ENCODE measurements at regions of chr15 and their contacts with region 1.

Region 1: GRCh38 chr15:72722071-72722696 is 36.2 kb downstream of the BBS4 start:
- DNase-seq: peak; percentile 86
- H3K4me3 Mint-ChIP-seq: no peak overlapping the region
- H3K27ac Mint-ChIP-seq: no peak overlapping the region
- H3K4me1 Mint-ChIP-seq: peaks cover 5% of the 10 kb centered on the region
- H3K27me3 Mint-ChIP-seq: no peaks in the 10 kb centered on the region

Region 2: DNA sequence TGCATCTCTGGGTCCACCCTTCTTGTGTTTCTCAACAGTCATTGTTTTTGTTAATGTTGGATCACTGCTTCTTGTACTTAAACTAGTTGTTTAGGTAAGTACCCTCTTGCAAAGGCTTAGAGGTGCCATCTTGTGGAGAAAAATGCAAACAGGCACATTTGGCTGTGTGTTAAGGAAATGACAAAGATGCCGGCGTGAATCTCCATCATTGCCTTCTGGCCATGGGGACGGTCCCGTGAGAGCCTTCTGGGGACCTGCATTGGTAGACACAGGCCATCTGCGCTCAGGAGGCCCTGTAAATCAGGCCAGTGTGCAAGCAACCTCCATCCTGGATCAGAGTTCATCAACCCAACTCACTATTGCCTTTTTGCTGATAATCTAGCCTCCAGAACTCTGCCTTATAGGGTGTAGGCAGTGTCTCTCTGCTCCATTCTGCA is 1070.4 kb before region 1 on chr15:
- CTCF ChIA-PET with region 1: no interaction called
- intact Hi-C with region 1: no loop called
- DNase-seq: no peak
- H3K4me3 Mint-ChIP-seq: no peak overlapping the region
- H3K27ac Mint-ChIP-seq: no peak overlapping the region
- H3K4me1 Mint-ChIP-seq: no peaks in the 10 kb centered on the region
- H3K27me3 Mint-ChIP-seq: peaks cover 6% of the 10 kb centered on the region

Region 3: DNA sequence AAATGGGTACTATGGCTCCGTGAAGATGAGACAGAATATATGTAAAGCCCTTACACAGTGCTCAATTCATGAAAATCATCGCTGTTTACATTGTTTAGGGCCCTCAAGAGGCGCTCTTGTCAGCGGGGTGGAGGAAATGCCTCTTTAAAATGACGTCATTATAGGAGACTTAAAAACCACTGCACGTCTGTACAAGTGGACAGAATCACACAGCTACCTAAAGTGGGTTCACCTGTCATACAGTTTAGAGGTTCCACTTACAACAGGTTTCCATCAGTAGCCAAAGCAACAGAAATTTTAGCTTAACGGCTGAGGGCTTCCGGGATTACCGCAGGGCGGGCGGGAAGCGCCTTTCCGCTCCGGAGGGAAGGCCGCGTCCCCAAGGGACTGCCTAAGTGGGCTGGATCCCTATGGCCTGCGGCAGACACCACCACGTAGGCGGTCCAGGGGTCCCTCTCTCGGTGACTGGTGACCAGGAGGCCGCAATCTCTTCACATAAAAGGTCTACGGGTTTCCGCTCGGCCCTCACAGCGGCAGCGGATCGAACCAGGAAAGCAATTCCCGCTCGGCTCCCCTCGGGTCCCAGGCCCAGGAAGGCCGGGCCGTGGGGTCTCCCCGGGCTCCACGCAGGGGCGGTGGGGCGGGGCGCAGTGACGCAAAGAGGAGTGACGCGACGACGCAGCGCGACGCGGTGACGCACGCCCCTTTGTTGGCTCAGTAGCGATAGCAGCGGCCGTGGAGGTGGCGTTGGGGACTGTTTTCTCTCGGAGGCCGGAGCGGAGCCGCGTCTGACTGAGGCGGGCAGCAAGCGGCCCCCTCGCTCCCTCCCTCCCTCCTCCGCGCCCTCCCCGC is 248.3 kb before region 1 on chr15 and contains the start of gene ARIH1:
- CTCF ChIA-PET with region 1: no interaction called
- intact Hi-C with region 1: no loop called
- DNase-seq: peak; percentile 94
- H3K4me3 Mint-ChIP-seq: peak within 1 kb of the TSS; percentile 98
- H3K27ac Mint-ChIP-seq: peak within 1 kb of the TSS; percentile 98
- H3K4me1 Mint-ChIP-seq: peaks cover 34% of the 10 kb centered on the region
- H3K27me3 Mint-ChIP-seq: no peaks in the 10 kb centered on the region
- total RNA-seq, gene ARIH1: 174 to 183 TPM

Region 4: GRCh38 chr15:72740219-72740618 is 18.0 kb after region 1 on chr15:
- CTCF ChIA-PET with region 1: interaction called, 28 read pairs
- intact Hi-C with region 1: no loop called
- DNase-seq: no peak
- H3K4me3 Mint-ChIP-seq: no peak overlapping the region
- H3K27ac Mint-ChIP-seq: peak overlapping the region; percentile 59
- H3K4me1 Mint-ChIP-seq: peaks cover 32% of the 10 kb centered on the region
- H3K27me3 Mint-ChIP-seq: no peaks in the 10 kb centered on the region

Region 5: GRCh38 chr15:72770673-72771328 is 48.6 kb after region 1 on chr15:
- CTCF ChIA-PET with region 1: interaction called, 4 read pairs
- intact Hi-C with region 1: loop called (anchors 2 kb)
- DNase-seq: no peak
- H3K4me3 Mint-ChIP-seq: no peak overlapping the region
- H3K27ac Mint-ChIP-seq: peak overlapping the region; percentile 59
- H3K4me1 Mint-ChIP-seq: peaks cover 23% of the 10 kb centered on the region
- H3K27me3 Mint-ChIP-seq: no peaks in the 10 kb centered on the region

Region 6: GRCh38 chr15:72796515-72797337 is 74.5 kb after region 1 on chr15:
- CTCF ChIA-PET with region 1: interaction called, 4 read pairs
- intact Hi-C with region 1: loop called (anchors 1 kb)
- DNase-seq: peak; percentile 26
- H3K4me3 Mint-ChIP-seq: peak overlapping the region; percentile 70
- H3K27ac Mint-ChIP-seq: no peak overlapping the region
- H3K4me1 Mint-ChIP-seq: peaks cover 3% of the 10 kb centered on the region
- H3K27me3 Mint-ChIP-seq: peaks cover 20% of the 10 kb centered on the region

Region 7: GRCh38 chr15:72845981-72846383 is 123.8 kb after region 1 on chr15:
- CTCF ChIA-PET with region 1: no interaction called
- intact Hi-C with region 1: no loop called
- DNase-seq: no peak
- H3K4me3 Mint-ChIP-seq: no peak overlapping the region
- H3K27ac Mint-ChIP-seq: no peak overlapping the region
- H3K4me1 Mint-ChIP-seq: peaks cover 3% of the 10 kb centered on the region
- H3K27me3 Mint-ChIP-seq: peaks cover 23% of the 10 kb centered on the region

Region 8: DNA sequence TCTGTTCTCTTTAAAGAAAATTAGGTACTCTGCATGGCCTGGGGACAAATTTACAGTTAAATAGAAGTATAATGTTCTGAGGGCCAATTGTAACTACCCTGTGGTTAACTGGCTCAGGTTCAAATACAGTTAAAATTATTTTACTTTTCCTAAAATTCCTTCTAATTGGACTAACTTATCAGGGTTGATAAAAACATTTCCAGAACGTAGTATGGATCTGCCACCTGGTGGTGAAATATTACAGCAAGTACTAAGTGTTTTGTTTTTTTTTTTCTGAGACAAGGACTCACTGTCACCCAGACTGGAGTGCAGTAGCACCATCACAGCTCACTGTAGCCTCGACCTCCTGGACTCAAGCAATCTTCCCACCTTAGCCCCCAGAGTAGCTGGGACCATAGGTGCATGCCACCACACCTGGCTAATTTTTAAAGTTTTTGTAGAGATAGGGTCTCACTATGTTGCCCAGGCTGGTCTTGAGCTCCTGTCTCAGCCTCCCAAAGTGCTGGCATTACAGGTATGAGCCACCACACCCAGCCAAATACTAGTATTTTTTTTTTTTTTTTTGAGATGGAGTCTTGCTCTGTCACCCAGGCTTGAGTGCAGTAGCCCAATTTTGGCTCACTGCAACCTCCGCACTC is 359.3 kb after region 1 on chr15:
- CTCF ChIA-PET with region 1: interaction called, 20 read pairs
- intact Hi-C with region 1: loop called (anchors 1 kb)
- DNase-seq: peak; percentile 6
- H3K4me3 Mint-ChIP-seq: no peak overlapping the region
- H3K27ac Mint-ChIP-seq: no peak overlapping the region
- H3K4me1 Mint-ChIP-seq: no peaks in the 10 kb centered on the region
- H3K27me3 Mint-ChIP-seq: no peaks in the 10 kb centered on the region

Region 9: DNA sequence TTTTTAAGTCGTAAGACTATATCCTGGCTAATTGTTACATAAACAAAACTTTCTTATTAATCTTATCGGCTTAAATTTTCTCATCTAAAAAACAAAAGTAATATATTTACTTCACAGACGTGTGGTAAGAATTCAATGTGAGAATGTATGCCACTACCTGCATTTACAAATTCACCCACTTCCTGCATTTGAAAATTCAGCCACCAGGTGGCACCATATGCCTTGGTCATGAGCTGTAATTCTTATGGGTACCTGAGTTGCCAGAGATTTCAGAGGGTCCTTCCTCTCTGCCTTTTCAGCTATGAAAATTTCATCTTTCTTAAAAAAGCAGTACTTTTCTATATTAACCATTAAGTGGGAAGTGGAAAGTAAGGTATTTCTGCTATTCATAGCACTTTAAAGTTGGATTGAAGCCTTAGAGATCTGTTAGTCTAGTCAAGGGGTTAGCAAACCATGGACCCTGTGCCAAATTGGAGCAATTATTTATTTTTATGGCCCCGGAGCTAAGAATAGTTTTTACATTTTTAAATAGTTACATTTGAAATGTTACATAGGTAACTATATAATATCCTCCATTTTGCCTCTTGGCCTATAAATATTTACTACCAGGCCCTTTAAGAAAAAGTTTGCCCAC is 518.8 kb after region 1 on chr15:
- CTCF ChIA-PET with region 1: interaction called, 3 read pairs
- intact Hi-C with region 1: loop called (anchors 5 kb)
- DNase-seq: peak; percentile 89
- H3K4me3 Mint-ChIP-seq: no peak overlapping the region
- H3K27ac Mint-ChIP-seq: no peak overlapping the region
- H3K4me1 Mint-ChIP-seq: no peaks in the 10 kb centered on the region
- H3K27me3 Mint-ChIP-seq: no peaks in the 10 kb centered on the region

Measured in activated naive CD4-positive, alpha-beta T cell treated with anti-CD3 and anti-CD28 coated beads for 36 hours (primary cell).